ENCODE measurements at regions of chr3 and their contacts with region 1.

Region 1: GRCh38 chr3:189586941-189587663 is 44.1 kb upstream of the TP63 start:
- DNase-seq: no peak
- H3K4me3 Mint-ChIP-seq: no peak overlapping the region
- H3K27ac Mint-ChIP-seq: peak overlapping the region; percentile 64
- H3K4me1 Mint-ChIP-seq: peaks cover 28% of the 10 kb centered on the region
- H3K27me3 Mint-ChIP-seq: peaks cover 2% of the 10 kb centered on the region

Region 2: DNA sequence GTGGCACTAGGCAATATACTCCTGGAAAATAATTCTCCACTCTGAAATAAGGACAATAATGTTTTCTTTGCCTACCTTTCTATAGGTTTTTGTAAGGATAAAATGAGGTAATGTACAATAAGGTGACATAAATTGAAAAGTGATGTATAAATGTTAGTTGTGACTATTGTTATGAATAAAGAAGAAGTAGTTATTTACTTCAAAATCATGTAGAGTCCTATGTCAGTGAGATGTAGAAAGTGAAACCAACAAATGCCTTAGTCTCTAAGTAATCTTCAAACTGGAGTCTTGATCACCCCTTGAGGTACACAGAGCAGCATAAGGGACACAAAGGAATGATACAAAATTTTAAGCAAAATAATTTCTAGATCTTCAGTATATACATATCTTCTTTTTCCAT is 16.2 kb before region 1 on chr3:
- intact Hi-C with region 1: loop called (anchors 2 kb)
- DNase-seq: no peak
- H3K4me3 Mint-ChIP-seq: peak overlapping the region; percentile 9
- H3K27ac Mint-ChIP-seq: peak overlapping the region; percentile 20
- H3K4me1 Mint-ChIP-seq: peaks cover 70% of the 10 kb centered on the region
- H3K27me3 Mint-ChIP-seq: no peaks in the 10 kb centered on the region

Region 3: DNA sequence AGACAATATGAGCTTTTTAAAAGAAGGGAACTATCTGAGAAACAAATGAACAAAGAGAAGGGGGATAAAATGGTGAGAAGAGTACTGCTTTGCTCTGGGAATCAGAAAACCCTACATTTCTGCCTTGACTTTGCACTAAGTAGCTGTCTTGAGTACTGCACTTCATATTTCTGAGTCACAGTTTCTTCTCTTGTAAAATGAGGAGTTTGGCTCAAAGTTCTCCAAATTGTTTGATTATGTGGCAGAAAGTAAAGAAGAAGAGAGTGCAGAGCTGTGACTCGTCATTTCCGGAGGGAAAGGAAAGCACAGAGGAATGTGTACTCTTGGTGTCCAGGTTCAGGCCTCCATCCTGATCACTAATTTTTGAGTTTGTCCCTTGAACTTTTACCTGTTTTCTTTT is 98.8 kb after region 1 on chr3:
- intact Hi-C with region 1: loop called (anchors 1 kb)
- DNase-seq: no peak
- H3K4me3 Mint-ChIP-seq: no peak overlapping the region
- H3K27ac Mint-ChIP-seq: peak overlapping the region; percentile 51
- H3K4me1 Mint-ChIP-seq: peaks cover 43% of the 10 kb centered on the region
- H3K27me3 Mint-ChIP-seq: no peaks in the 10 kb centered on the region